ENCODE measurements at regions of chr10 and their contacts with region 1.

Region 1: DNA sequence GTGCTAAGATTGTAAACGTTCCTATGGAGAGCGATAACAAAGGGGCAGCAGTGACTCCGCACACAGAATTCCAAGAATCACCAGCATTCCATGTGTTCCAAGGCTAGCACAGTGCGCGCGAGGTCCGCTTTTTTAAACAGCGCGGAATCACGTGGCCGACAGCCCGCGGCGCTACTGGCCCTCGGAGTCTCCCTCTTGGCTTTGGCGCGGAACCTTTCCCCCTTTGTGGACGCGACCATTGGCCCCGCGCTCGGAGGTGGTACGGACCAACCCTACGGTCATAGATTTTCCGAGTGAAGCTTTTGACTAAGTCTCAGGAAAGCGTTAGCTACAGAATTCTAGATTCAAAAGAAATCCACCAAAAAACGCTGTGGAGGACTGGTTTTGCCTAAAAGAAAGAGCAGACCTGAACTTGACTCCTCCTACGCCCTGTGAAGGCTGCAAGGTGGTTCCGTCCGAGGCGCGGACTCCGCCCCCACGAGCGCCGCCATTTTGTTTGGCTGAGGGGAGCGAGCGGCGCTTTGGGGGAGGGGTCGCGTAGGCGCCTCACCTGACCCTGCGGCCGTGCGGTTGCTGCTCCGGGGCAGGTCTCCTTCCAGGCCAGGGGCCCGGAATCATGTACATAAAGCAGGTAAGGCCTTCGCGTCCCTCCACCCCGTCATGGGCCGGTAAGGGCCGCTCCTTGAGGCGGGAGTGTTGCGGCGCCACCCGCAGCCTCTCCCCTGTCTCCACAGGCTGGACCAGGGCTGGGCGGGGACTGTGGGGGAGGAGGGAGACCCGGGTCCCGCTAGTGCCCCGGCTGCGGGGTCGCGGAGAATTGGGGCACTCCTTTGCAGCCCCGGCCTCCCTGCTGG is at the start of gene SMC3:
- DNase-seq: peak; percentile 82 to 96 (median 94)
- ATAC-seq: peak; percentile 94
- H3K4me3 ChIP-seq: peak within 1 kb of the TSS; percentile 88
- H3K4me3 Mint-ChIP-seq: peak within 1 kb of the TSS; percentile 91 to 99 (median 96)
- H3K27ac ChIP-seq: peak within 1 kb of the TSS; percentile 88
- H3K27ac Mint-ChIP-seq: peak within 1 kb of the TSS; percentile 96 to 99 (median 97)
- H3K4me1 ChIP-seq: peaks cover 20 to 21% of the 10 kb centered on the region in 2 donors
- H3K4me1 Mint-ChIP-seq: peaks cover 21 to 45% (median 38%) of the 10 kb centered on the region in 7 donors
- H3K27me3 ChIP-seq: no peaks in the 10 kb centered on the region
- H3K27me3 Mint-ChIP-seq: peaks cover 6 to 26% (median 14%) of the 10 kb centered on the region in 5 donors
- total RNA-seq, gene SMC3: 29.8 to 69.8 (median 48.5) TPM

Region 2: DNA sequence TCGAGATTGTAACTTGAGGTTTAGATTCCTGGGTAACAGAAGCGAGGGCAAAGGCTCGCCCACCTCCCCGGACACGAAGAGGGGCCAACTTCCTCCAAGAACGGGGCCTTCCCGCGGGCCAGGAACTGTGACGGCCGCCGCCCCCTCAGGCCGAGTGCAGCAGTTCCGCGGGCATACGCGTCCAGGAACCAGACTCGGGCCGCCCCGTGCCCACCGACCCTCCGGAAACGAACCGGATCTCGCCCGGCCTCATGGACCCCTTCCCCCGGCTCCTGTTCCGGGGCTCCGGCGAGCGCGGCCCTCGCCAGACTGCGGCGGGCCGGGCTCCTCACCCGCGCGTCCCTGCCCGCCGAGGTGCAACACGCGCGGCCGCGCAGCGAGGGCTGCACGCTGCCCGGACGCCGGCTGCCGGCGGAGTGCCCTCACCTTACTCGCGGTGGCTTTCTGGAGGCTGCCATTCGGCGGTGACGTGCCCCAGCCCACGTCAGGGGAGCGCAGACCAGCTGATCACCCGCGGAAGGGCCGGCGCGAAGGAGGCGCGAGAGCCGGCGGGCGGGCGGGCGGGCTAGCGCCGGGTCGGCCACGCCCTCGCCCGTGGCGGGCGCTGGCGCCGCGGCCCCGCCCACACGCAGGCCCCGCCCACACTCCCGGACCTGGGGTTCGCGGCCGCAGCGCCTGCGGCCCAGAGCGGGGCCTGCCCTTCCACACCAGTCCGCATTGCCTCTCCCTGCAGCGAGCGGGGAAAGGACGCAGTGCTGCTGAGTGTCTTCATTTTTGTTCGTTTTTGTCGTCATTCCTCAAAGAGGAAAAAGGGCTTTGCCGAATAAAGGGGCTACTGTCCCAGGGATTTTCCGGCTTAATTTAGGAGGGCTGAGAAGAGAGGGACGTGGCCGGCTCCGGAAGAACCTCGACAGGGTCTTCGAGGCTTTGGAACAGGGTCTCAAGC is 644.2 kb before region 1 on chr10 and contains the start of gene XPNPEP1:
- CTCF ChIA-PET with region 1: no interaction called
- POLR2A ChIA-PET with region 1: no interaction called
- intact Hi-C with region 1: loop called (anchors 1 to 10 kb)
- DNase-seq: peak; percentile 55 to 90 (median 66)
- ATAC-seq: peak; percentile 98
- H3K4me3 ChIP-seq: peak within 1 kb of the TSS; percentile 67
- H3K4me3 Mint-ChIP-seq: peak within 1 kb of the TSS; percentile 78 to 94 (median 90)
- H3K27ac ChIP-seq: peak within 1 kb of the TSS; percentile 83
- H3K27ac Mint-ChIP-seq: peak within 1 kb of the TSS; percentile 75 to 95 (median 89)
- H3K4me1 ChIP-seq: peaks cover 30 to 39% of the 10 kb centered on the region in 2 donors
- H3K4me1 Mint-ChIP-seq: peaks cover 36 to 58% (median 54%) of the 10 kb centered on the region in 7 donors
- H3K27me3 ChIP-seq: no peaks in the 10 kb centered on the region
- H3K27me3 Mint-ChIP-seq: peaks cover 0 to 16% (median 0%) of the 10 kb centered on the region in 5 donors
- total RNA-seq, gene XPNPEP1: 44.1 to 100 (median 60.7) TPM

Region 3: DNA sequence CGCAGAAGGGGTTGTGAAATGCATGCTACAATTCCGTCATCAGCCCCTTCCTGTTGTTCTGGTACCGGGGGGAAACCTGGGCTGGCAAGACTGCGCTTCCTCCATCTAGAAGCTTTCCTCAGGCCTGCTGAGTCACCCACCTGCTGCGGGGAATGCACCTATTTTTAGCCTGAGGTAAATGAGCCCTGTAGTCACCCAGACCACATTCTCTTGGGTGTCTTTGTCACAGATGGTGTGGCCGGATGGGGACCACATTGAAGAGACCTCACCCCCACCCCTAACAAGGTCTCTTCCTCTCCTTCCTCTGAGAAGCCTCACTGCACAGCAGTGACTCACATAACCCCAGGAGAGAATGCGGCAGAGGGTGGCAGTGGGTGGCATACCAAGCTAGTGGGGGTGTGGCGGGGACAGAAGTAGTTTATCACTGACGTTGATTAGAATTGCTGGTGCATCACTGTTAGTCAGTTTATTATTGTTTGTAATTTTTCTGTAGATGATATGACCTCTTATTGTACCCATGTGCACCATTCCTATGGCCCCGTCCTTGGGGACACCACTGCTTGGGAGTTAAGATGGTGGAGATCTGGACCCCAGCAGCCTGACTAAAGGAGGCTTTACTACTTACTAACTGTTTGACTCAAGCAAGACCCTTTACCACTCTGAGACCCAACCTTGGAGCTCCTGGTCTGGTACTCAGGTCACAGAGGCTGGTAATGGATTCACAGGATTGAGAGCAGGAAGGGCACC is 152.7 kb before region 1 on chr10:
- CTCF ChIA-PET with region 1: no interaction called
- POLR2A ChIA-PET with region 1: no interaction called
- intact Hi-C with region 1: loop called in 1 of 2 experiments (anchors 1 kb)
- DNase-seq: peak; percentile 42 to 84 (median 69)
- ATAC-seq: peak; percentile 96
- H3K4me3 ChIP-seq: no peak overlapping the region
- H3K4me3 Mint-ChIP-seq: peak overlapping the region in 9 of 10 donors; percentile 13 to 71 (median 40)
- H3K27ac ChIP-seq: no peak overlapping the region
- H3K27ac Mint-ChIP-seq: peak overlapping the region; percentile 20 to 88 (median 74)
- H3K4me1 ChIP-seq: peaks cover 14 to 35% of the 10 kb centered on the region in 2 donors
- H3K4me1 Mint-ChIP-seq: peaks cover 19 to 64% (median 26%) of the 10 kb centered on the region in 7 donors
- H3K27me3 ChIP-seq: no peaks in the 10 kb centered on the region
- H3K27me3 Mint-ChIP-seq: peaks cover 0 to 5% (median 0%) of the 10 kb centered on the region in 5 donors

Region 4: DNA sequence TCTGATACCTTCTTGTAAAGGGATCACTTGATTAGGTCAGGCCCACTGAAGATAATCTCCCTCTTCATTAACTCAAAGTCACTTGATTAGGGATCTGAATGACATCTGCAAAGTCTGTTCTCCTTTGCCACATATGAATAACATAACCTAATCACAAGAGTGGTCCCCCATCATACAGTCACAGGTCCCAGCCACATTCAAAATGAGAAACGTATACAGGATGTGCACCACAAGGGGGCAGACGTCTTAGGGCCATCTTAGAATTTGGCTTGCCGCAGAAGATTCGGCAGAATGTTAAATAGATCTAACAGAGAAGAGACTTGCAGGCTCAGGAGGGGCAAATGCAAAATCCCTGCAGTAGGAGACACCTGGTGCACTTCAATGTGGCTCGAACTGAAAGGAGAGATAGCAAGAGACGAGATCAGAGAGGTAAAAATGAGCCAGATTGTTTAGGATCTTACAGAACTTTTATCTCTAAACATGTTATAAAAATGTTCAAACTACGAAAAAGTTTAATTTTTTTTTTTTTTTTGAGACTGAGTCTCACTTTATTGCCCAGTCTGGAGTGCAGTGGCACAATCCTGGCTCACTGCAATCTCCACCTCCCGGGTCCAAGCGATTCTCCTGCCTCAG is 10.3 kb before region 1 on chr10:
- CTCF ChIA-PET with region 1: interaction called, 3 read pairs
- POLR2A ChIA-PET with region 1: interaction called, 3 read pairs
- intact Hi-C with region 1: loop called (anchors 1 kb)
- DNase-seq: peak; percentile 27 to 68 (median 56)
- ATAC-seq: peak; percentile 99
- H3K4me3 ChIP-seq: no peak overlapping the region
- H3K4me3 Mint-ChIP-seq: peak overlapping the region in 1 of 10 donors; percentile 2
- H3K27ac ChIP-seq: no peak overlapping the region
- H3K27ac Mint-ChIP-seq: peak overlapping the region in 6 of 9 donors; percentile 1 to 67 (median 42)
- H3K4me1 ChIP-seq: no peaks in the 10 kb centered on the region
- H3K4me1 Mint-ChIP-seq: peaks cover 2 to 10% (median 5%) of the 10 kb centered on the region in 7 donors
- H3K27me3 ChIP-seq: no peaks in the 10 kb centered on the region
- H3K27me3 Mint-ChIP-seq: peaks cover 0 to 68% (median 0%) of the 10 kb centered on the region in 5 donors

Region 5: GRCh38 chr10:110671788-110672579 is 104.6 kb after region 1 on chr10:
- CTCF ChIA-PET with region 1: no interaction called
- POLR2A ChIA-PET with region 1: no interaction called
- intact Hi-C with region 1: loop called in 1 of 2 experiments (anchors 5 kb)
- DNase-seq: peak; percentile 31 to 66 (median 59)
- ATAC-seq: peak; percentile 97
- H3K4me3 ChIP-seq: peak overlapping the region; percentile 88
- H3K4me3 Mint-ChIP-seq: peak overlapping the region; percentile 80 to 94 (median 91)
- H3K27ac ChIP-seq: peak overlapping the region; percentile 70
- H3K27ac Mint-ChIP-seq: peak overlapping the region in 8 of 9 donors; percentile 34 to 90 (median 82)
- H3K4me1 ChIP-seq: peaks cover 0 to 3% of the 10 kb centered on the region in 2 donors
- H3K4me1 Mint-ChIP-seq: peaks cover 0 to 12% (median 4%) of the 10 kb centered on the region in 7 donors
- H3K27me3 ChIP-seq: no peaks in the 10 kb centered on the region
- H3K27me3 Mint-ChIP-seq: peaks cover 0 to 77% (median 0%) of the 10 kb centered on the region in 5 donors

Measured in naive thymus-derived CD4-positive, alpha-beta T cell (primary cell).